ENCODE measurements at regions of chr17 and their contacts with region 1.

Region 1: DNA sequence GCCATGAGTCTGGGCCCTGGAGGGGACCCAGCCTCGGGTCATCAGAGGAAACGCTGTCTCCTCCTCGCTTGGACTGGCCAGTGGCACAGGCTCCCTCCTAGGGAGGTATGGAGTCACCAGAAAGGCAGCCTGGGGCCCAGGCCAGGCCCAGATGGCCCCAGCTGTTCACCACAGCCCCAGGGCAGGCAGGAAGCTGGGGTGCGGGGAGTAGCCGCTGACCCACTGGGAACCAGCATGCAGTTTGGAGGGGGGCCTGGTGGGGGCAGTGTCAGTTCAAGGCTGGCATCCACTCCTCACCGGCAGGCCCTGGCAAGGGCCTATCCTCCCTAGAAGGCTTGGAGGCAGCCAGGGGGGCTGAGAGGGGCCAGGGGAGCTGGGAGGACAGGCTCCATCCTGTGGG is 48.8 kb downstream of the SDK2 start:
- DNase-seq: no peak
- H3K4me3 ChIP-seq: no peak overlapping the region
- H3K27ac ChIP-seq: no peak overlapping the region
- H3K4me1 ChIP-seq: no peaks in the 10 kb centered on the region
- H3K27me3 ChIP-seq: no peaks in the 10 kb centered on the region
- CTCF ChIP-seq: peak; percentile 41 to 64 (median 51)

Region 2: GRCh38 chr17:73189417-73190099 is 405.9 kb before region 1 on chr17:
- intact Hi-C with region 1: no loop called
- DNase-seq: no peak
- H3K4me3 ChIP-seq: no peak overlapping the region
- H3K27ac ChIP-seq: no peak overlapping the region
- H3K4me1 ChIP-seq: peaks cover 4 to 5% of the 10 kb centered on the region in 2 donors
- H3K27me3 ChIP-seq: no peaks in the 10 kb centered on the region
- CTCF ChIP-seq: no peak

Region 3: GRCh38 chr17:73657473-73658116 is 62.1 kb after region 1 on chr17:
- intact Hi-C with region 1: loop called (anchors 10 kb)
- DNase-seq: no peak
- H3K4me3 ChIP-seq: no peak overlapping the region
- H3K27ac ChIP-seq: no peak overlapping the region
- H3K4me1 ChIP-seq: no peaks in the 10 kb centered on the region
- H3K27me3 ChIP-seq: no peaks in the 10 kb centered on the region
- CTCF ChIP-seq: peak in 2 of 3 experiments; percentile 35 to 45

Region 4: DNA sequence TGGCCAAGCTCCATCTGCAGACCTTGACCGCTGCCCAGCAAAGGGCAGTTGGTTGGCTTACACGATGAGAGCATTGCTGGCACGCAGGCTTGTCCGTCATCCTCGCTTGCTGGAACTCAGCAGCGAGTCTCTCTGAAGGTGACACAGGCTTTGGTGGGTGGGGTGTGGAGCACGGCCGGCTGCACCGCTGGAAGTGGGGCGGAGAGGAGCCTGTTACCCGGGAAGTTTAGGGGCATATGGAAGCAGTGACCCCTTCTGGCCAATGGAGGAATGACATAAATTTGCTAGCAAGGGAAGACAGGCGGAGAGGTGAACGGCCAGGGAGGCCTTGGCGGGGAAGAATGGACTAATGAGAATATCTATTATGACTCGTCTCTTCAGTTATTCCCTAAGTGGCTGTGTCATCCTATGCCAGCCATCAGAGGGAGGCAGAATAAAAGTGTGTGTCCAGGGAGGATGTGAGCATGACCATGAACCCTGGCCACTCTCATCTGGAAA is 114.7 kb after region 1 on chr17:
- intact Hi-C with region 1: loop called (anchors 1 kb)
- DNase-seq: peak in 1 of 2 donors; percentile 77
- H3K4me3 ChIP-seq: no peak overlapping the region
- H3K27ac ChIP-seq: no peak overlapping the region
- H3K4me1 ChIP-seq: peaks cover 0 to 2% of the 10 kb centered on the region in 2 donors
- H3K27me3 ChIP-seq: no peaks in the 10 kb centered on the region
- CTCF ChIP-seq: peak; percentile 72 to 82 (median 78)

Region 5: DNA sequence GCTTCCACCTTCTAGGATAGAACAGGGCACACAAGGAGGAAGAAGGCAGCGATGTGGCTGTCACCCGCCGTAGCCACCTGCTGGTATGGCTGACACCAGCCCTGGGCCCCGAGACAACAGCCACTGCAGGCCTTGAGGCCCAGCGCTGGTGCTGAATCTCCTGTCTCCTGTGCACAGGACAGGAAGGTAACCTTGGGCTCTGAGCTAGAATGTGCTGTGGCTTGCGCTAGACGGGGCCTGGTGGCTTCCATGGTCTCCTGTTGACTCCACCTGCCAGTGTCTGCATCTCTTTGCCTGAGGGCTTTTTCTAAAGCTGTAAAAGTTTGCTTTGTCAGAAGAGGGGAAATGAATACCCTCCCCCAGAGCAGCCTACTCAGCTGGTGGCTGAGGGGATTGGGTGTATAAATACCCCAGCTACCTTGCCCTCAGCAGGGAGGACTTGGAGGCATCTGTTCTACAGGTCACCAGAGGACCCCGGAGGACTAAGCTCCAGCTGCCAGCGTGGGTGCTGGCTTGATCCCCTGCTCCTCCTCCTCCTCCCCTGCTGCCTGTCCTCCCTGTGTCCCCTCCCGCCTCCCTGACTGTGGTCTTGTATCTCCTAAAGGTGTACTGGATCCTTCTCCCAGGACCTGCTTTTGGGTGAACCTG is 124.8 kb after region 1 on chr17:
- intact Hi-C with region 1: no loop called
- DNase-seq: no peak
- H3K4me3 ChIP-seq: no peak overlapping the region
- H3K27ac ChIP-seq: no peak overlapping the region
- H3K4me1 ChIP-seq: no peaks in the 10 kb centered on the region
- H3K27me3 ChIP-seq: no peaks in the 10 kb centered on the region
- CTCF ChIP-seq: no peak

Measured in ascending aorta (tissue), 2 donors.